ENCODE measurements at regions of chr6 and their contacts with region 1.

Region 1: GRCh38 chr6:32244946-32245398 is 21.1 kb upstream of the NOTCH4 start:
- DNase-seq: peak; percentile 74
- H3K4me3 Mint-ChIP-seq: peak overlapping the region; percentile 68
- H3K27ac Mint-ChIP-seq: peak overlapping the region; percentile 71
- H3K4me1 Mint-ChIP-seq: peaks cover 9% of the 10 kb centered on the region
- H3K27me3 Mint-ChIP-seq: peaks cover 12% of the 10 kb centered on the region
- CTCF ChIP-seq: peak; percentile 89

Region 2: GRCh38 chr6:32108094-32108627 is 136.8 kb before region 1 on chr6:
- CTCF ChIA-PET with region 1: no interaction called
- POLR2A ChIA-PET with region 1: no interaction called
- intact Hi-C with region 1: no loop called
- DNase-seq: peak; percentile 56
- H3K4me3 Mint-ChIP-seq: peak overlapping the region; percentile 52
- H3K27ac Mint-ChIP-seq: peak overlapping the region; percentile 67
- H3K4me1 Mint-ChIP-seq: peaks cover 41% of the 10 kb centered on the region
- H3K27me3 Mint-ChIP-seq: peaks cover 42% of the 10 kb centered on the region
- CTCF ChIP-seq: no peak

Region 3: GRCh38 chr6:32153564-32154513 is 91.1 kb before region 1 on chr6 and contains the start of gene PPT2:
- CTCF ChIA-PET with region 1: no interaction called
- POLR2A ChIA-PET with region 1: no interaction called
- intact Hi-C with region 1: no loop called
- DNase-seq: peak; percentile 79
- H3K4me3 Mint-ChIP-seq: peak within 1 kb of the TSS; percentile 86
- H3K27ac Mint-ChIP-seq: peak within 1 kb of the TSS; percentile 83
- H3K4me1 Mint-ChIP-seq: peaks cover 18% of the 10 kb centered on the region
- H3K27me3 Mint-ChIP-seq: no peaks in the 10 kb centered on the region
- CTCF ChIP-seq: no peak
- total RNA-seq, gene PPT2: 3.7 and 5.4 TPM in 2 replicates

Region 4: GRCh38 chr6:32255199-32256153 is 10.5 kb after region 1 on chr6:
- CTCF ChIA-PET with region 1: interaction called, 34 read pairs
- POLR2A ChIA-PET with region 1: interaction called, 5 read pairs
- intact Hi-C with region 1: no loop called
- DNase-seq: peak; percentile 90
- H3K4me3 Mint-ChIP-seq: peak overlapping the region; percentile 66
- H3K27ac Mint-ChIP-seq: peak overlapping the region; percentile 21
- H3K4me1 Mint-ChIP-seq: peaks cover 6% of the 10 kb centered on the region
- H3K27me3 Mint-ChIP-seq: peaks cover 51% of the 10 kb centered on the region
- CTCF ChIP-seq: peak; percentile 81